ENCODE measurements at regions of chr5 and their contacts with region 1.

Region 1: DNA sequence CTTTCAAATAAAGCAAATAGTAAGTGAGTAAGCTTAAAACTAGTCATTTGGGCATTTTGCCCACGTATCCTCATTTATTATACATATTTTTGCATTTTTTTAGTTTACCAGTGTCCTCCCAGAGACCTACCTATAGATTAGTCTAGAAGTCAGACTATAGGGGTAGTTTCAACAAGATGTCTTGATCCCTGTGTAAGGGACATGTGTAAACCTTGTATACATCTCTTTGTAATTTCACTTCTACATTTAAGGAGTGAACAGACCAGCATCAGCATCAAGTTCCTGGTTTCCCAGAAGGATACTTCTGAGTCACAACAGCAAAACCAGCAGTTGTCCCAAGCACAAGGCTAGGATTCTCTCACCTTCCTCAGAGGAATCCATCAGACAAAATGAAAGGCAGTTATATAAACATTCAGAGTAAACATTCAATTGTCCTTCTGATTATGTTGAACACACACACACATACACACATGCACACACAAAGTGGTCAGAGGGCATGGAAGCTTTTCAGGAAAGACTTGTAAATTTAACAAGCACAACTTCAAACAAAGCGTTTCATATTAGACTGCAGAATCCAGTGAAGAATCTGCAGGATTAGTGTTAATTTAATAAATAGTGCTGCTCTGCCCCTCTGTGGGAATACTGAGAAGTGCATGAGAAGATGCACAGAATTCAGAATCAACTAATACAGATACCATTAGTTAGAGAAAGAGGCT is 55.4 kb downstream of the HINT1 start:
- DNase-seq: peak; percentile 74
- H3K4me3 Mint-ChIP-seq: no peak overlapping the region
- H3K27ac Mint-ChIP-seq: no peak overlapping the region
- H3K4me1 Mint-ChIP-seq: peaks cover 5% of the 10 kb centered on the region
- H3K27me3 Mint-ChIP-seq: no peaks in the 10 kb centered on the region
- CTCF ChIP-seq: peak; percentile 89

Region 2: DNA sequence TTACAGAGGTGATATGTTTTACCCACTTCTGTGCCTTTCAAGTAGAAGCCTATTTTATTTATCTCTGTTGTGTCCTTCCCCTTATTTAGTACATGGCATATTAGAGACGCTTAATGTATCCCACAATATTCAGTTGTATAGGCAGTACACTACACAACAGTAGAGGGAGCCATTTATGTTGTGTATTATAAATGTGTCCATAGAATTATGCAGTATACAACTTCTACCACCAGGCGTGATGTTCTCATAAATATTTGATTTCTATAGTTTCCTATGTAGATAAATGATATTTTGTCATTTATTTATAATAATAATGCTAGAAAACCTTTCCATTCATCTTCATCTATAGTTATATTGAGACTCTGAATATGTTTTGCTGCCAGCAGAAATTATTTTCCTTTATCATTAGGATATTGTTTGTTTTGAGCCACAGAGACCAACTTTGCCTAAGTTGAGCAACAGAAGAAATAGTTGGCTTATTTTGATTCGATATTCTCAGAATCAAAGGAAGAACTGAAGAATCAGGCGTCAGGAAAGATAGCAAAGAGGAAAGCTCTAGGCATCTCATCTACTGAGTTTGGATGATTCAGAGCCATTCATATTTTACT is 1568.0 kb before region 1 on chr5:
- CTCF ChIA-PET with region 1: no interaction called
- POLR2A ChIA-PET with region 1: no interaction called
- intact Hi-C with region 1: loop called (anchors 10 kb)
- DNase-seq: peak; percentile 74
- H3K4me3 Mint-ChIP-seq: no peak overlapping the region
- H3K27ac Mint-ChIP-seq: no peak overlapping the region
- H3K4me1 Mint-ChIP-seq: no peaks in the 10 kb centered on the region
- H3K27me3 Mint-ChIP-seq: peaks cover 16% of the 10 kb centered on the region
- CTCF ChIP-seq: peak; percentile 60

Region 3: GRCh38 chr5:130720355-130720754 is 389.3 kb before region 1 on chr5:
- CTCF ChIA-PET with region 1: interaction called, 4 read pairs
- POLR2A ChIA-PET with region 1: interaction called, 3 read pairs
- intact Hi-C with region 1: loop called (anchors 1 kb)
- DNase-seq: peak; percentile 88
- H3K4me3 Mint-ChIP-seq: no peak overlapping the region
- H3K27ac Mint-ChIP-seq: no peak overlapping the region
- H3K4me1 Mint-ChIP-seq: no peaks in the 10 kb centered on the region
- H3K27me3 Mint-ChIP-seq: no peaks in the 10 kb centered on the region
- CTCF ChIP-seq: peak; percentile 80

Region 4: DNA sequence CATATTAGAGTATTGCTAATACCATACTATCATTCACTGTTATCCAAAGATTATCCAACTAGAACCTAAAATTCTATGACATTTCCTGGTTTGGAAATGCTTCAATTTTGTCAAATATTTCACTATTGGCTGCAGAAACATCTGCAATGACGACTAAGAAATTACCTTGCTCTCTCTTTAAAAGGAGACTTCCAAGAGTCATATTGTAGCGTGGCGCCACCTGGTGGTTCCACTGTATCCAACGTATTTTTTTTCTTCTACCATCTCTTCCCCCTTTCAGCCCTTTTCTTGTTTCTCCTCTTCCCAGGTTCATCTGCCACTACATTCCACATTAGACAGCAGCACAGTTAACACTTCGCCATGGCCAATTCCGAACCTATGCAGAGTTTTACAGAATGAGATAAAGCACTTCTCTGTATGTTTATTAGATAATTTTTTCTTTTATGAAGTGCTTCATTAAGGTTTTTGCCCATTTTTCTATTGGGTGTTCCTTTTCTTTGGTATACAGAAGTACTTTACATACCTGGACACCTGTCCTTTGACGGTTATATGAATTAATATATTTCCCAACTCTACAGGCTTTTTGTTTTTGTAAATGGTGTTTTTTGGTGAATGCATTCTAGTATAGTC is 307.7 kb after region 1 on chr5:
- CTCF ChIA-PET with region 1: interaction called, 5 read pairs
- POLR2A ChIA-PET with region 1: no interaction called
- intact Hi-C with region 1: loop called (anchors 1 kb)
- DNase-seq: peak; percentile 85
- H3K4me3 Mint-ChIP-seq: no peak overlapping the region
- H3K27ac Mint-ChIP-seq: no peak overlapping the region
- H3K4me1 Mint-ChIP-seq: peaks cover 5% of the 10 kb centered on the region
- H3K27me3 Mint-ChIP-seq: no peaks in the 10 kb centered on the region
- CTCF ChIP-seq: peak; percentile 89

Measured in MCF 10A (cell line).